Mammary epithelial cell (primary cell): ENCODE measurements at regions of chr16 and their contacts with region 1.

Region 1: GRCh38 chr16:306911-307370 is 24.0 kb downstream of the PDIA2 start:
- DNase-seq: no peak
- H3K4me3 ChIP-seq: no peak overlapping the region
- H3K27ac ChIP-seq: no peak overlapping the region
- H3K4me1 ChIP-seq: peaks cover 11% of the 10 kb centered on the region
- H3K27me3 ChIP-seq: no peaks in the 10 kb centered on the region
- CTCF ChIP-seq: no peak

Region 2: DNA sequence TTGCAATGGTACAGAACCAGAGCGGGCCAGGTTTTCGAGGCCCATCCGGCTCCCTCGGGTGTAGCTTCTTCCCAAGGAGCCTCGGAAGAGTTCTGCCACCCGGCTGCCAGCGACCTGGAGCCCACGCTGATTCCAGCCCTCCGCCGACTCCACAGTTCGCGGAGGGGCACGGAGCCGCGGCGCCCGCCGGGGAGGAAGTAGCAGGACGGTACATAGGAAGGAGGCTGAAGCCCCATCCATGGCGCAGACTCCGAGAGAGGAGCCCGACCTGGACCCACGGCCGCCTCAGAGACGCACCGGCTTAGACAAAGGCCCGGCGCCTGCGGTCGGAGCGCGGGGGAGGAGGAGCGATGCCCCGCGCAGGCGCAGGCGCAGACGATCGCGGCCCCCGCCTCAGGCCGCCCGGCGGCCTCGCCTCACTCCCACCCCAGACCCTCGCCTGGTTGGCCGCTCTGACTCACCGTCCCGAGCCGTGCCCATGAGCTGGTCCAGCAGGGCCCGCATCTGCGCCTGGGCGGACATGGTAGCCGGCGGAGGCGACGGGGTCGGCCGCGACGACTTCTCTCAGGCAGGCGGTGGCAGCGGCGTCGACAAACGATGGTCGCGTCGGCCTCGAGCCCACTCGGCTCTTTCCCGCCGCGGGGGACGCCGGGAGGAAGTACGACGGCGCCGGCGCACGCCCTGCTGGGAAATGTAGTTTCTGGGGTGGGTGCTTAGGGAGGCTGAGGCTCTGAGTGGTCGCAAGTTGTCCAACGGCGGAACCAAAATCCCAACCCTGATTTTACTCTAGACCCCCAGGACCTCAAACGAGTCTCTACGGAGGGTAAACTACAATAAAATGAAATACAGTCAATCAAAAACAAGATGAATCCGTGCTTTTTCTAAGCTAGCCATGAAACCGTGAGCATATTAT is 77.9 kb before region 1 on chr16 and contains the start of gene LUC7L:
- CTCF ChIA-PET with region 1: no interaction called
- dilution Hi-C with region 1: no loop called
- in situ Hi-C with region 1: no loop called
- intact Hi-C with region 1: no loop called
- DNase-seq: peak; percentile 86
- H3K4me3 ChIP-seq: peak within 1 kb of the TSS; percentile 87 to 97 (median 93)
- H3K27ac ChIP-seq: peak within 1 kb of the TSS; percentile 88
- H3K4me1 ChIP-seq: peaks cover 10% of the 10 kb centered on the region
- H3K27me3 ChIP-seq: no peaks in the 10 kb centered on the region
- CTCF ChIP-seq: no peak
- total RNA-seq, gene LUC7L: 29.3 to 56.8 TPM

Region 3: GRCh38 chr16:346587-346986 is 39.6 kb after region 1 on chr16:
- CTCF ChIA-PET with region 1: no interaction called
- dilution Hi-C with region 1: no loop called
- in situ Hi-C with region 1: no loop called
- intact Hi-C with region 1: loop called (anchors 2 kb)
- DNase-seq: peak; percentile 46
- H3K4me3 ChIP-seq: no peak overlapping the region
- H3K27ac ChIP-seq: no peak overlapping the region
- H3K4me1 ChIP-seq: peaks cover 11% of the 10 kb centered on the region
- H3K27me3 ChIP-seq: no peaks in the 10 kb centered on the region
- CTCF ChIP-seq: no peak